HepG2 (cell line): ENCODE measurements at regions of chr11 and their contacts with region 1.

Region 1: GRCh38 chr11:77066229-77067042 is at the start of gene CAPN5:
- DNase-seq: peak; percentile 79
- ATAC-seq: peak; percentile 94
- H3K4me3 ChIP-seq: peak within 1 kb of the TSS; percentile 53 to 74 (median 66)
- H3K27ac ChIP-seq: no peak within 1 kb of the TSS
- H3K4me1 ChIP-seq: peaks cover 37% of the 10 kb centered on the region
- H3K27me3 ChIP-seq: peaks cover 19 to 60% of the 10 kb centered on the region in 2 experiments
- CTCF ChIP-seq: peak; percentile 66
- EP300 ChIP-seq: no peak
- POLR2A ChIP-seq: peak in 1 of 2 experiments; percentile 58; a peak in 2 of 4 replicates
- RAD21 ChIP-seq: peak; percentile 64
- total RNA-seq, gene CAPN5: 0.22 and 0.27 TPM in 2 replicates

Region 2: GRCh38 chr11:76888989-76889388 is 177.4 kb before region 1 on chr11:
- CTCF ChIA-PET with region 1: no interaction called
- POLR2A ChIA-PET with region 1: no interaction called
- in situ Hi-C with region 1: no loop called
- intact Hi-C with region 1: no loop called
- DNase-seq: peak; percentile 3
- ATAC-seq: no peak; the same call in 2 of the 3 replicates
- H3K4me3 ChIP-seq: no peak overlapping the region
- H3K27ac ChIP-seq: no peak overlapping the region
- H3K4me1 ChIP-seq: peaks cover 16% of the 10 kb centered on the region
- H3K27me3 ChIP-seq: no peaks in the 10 kb centered on the region
- CTCF ChIP-seq: no peak
- EP300 ChIP-seq: no peak
- POLR2A ChIP-seq: no peak
- RAD21 ChIP-seq: no peak

Region 3: GRCh38 chr11:77091146-77091940 is 24.9 kb after region 1 on chr11:
- CTCF ChIA-PET with region 1: interaction called, 4 read pairs
- POLR2A ChIA-PET with region 1: interaction called, 16 read pairs
- in situ Hi-C with region 1: no loop called
- intact Hi-C with region 1: loop called (anchors 1 kb)
- DNase-seq: peak; percentile 60
- ATAC-seq: peak; percentile 62
- H3K4me3 ChIP-seq: no peak overlapping the region
- H3K27ac ChIP-seq: no peak overlapping the region
- H3K4me1 ChIP-seq: peaks cover 38% of the 10 kb centered on the region
- H3K27me3 ChIP-seq: no peaks in the 10 kb centered on the region; a peak in 1 of 5 replicates
- CTCF ChIP-seq: peak; percentile 97
- EP300 ChIP-seq: no peak
- POLR2A ChIP-seq: no peak
- RAD21 ChIP-seq: peak; percentile 94